ENCODE measurements at regions of chr22 and their contacts with region 1.

Region 1: DNA sequence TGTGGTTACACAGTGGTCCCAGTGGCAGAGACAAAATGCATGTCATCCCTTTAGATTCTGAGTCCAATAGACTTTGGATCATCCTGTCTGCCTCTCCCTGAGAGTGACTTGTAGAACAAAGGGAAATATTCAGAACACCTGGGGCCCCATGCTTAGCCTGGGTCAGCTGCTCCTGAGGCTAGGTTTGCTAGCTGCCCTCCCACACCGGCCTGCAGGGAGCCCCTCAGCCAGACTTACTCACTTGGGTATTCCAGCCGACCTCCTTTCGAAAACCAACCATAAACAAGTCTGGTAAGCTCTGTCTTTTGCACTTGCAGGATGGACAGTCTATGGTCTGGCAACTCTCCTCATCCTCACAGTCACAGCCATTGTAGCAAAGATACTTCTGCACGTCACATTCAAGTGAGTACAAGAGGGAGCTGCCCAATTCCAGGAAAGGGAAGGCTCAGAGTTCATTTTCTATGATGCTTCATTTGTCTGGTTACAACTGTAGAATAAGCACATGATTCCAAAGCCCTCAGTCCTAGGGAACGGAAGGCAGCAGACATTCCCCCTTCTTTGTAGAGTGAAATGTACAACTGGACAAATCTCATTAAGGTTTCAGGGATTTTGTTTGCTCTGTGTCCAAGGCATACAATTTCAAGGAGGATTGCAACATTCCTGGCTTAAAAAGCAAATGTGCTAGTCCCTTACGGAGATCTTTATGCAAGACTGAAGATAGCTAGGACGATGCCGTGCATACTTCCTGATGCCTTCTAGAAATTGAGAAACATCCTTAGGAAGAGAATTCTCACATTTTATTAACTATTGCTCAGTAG is 65.5 kb upstream of the EMID1 start:
- DNase-seq: no peak
- ATAC-seq: no peak
- H3K4me3 ChIP-seq: no peak overlapping the region
- H3K4me3 Mint-ChIP-seq: no peak overlapping the region
- H3K27ac ChIP-seq: no peak overlapping the region
- H3K27ac Mint-ChIP-seq: no peak overlapping the region
- H3K4me1 ChIP-seq: no peaks in the 10 kb centered on the region
- H3K4me1 Mint-ChIP-seq: no peaks in the 10 kb centered on the region
- H3K27me3 ChIP-seq: no peaks in the 10 kb centered on the region
- H3K27me3 Mint-ChIP-seq: peaks cover 3 to 6% of the 10 kb centered on the region in 2 donors
- CTCF ChIP-seq: no peak

Region 2: GRCh38 chr22:28408709-28409108 is 731.5 kb before region 1 on chr22:
- intact Hi-C with region 1: loop called (anchors 5 kb)
- DNase-seq: no peak
- ATAC-seq: no peak
- H3K4me3 ChIP-seq: no peak overlapping the region
- H3K4me3 Mint-ChIP-seq: no peak overlapping the region
- H3K27ac ChIP-seq: no peak overlapping the region
- H3K27ac Mint-ChIP-seq: no peak overlapping the region
- H3K4me1 ChIP-seq: no peaks in the 10 kb centered on the region
- H3K4me1 Mint-ChIP-seq: no peaks in the 10 kb centered on the region
- H3K27me3 ChIP-seq: no peaks in the 10 kb centered on the region
- H3K27me3 Mint-ChIP-seq: peaks cover 7 to 14% of the 10 kb centered on the region in 2 donors
- CTCF ChIP-seq: no peak

Region 3: GRCh38 chr22:29108109-29108508 is 32.1 kb before region 1 on chr22:
- intact Hi-C with region 1: no loop called
- DNase-seq: no peak
- ATAC-seq: no peak
- H3K4me3 ChIP-seq: no peak overlapping the region
- H3K4me3 Mint-ChIP-seq: no peak overlapping the region
- H3K27ac ChIP-seq: no peak overlapping the region
- H3K27ac Mint-ChIP-seq: no peak overlapping the region
- H3K4me1 ChIP-seq: no peaks in the 10 kb centered on the region
- H3K4me1 Mint-ChIP-seq: no peaks in the 10 kb centered on the region
- H3K27me3 ChIP-seq: no peaks in the 10 kb centered on the region
- H3K27me3 Mint-ChIP-seq: peaks cover 8% of the 10 kb centered on the region in 2 donors
- CTCF ChIP-seq: no peak

Measured in natural killer cell (primary cell).